GM12878 (cell line): ENCODE measurements at regions of chr18 and their contacts with region 1.

Region 1: DNA sequence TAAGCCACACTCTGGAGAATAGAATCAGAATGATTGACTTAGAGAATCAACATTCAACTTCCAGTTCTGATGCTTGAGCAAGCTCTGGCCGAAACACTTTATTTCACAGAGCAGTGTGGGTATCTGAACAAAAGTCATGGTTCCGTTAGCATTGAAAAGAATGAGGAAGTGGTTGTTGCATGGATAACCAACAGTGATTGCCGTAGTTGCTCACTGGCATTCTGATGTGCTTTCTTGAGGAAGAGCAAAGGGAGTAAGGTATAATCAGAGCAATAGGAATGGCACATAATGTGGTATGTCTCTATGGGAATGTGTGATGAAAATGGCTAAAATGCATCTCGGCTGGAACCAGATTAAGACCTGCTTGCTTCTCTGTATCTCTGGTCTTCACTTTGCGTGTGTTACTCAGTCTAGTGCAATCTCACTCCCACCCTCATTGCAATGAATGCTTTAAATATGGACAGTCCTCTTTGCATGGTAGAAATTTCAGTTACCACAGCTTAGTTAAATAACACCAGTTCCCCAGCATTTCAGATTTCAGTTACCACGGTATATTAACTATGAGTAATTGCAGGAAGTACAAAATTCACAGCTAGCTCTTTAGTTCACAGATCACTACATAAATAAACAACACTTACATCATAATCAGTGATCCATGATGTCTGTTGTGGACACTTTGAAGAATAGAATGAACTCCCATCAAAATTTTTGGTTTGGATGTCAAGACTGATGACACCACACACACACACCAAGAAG is 7.8 kb upstream of the RAB12 start:
- DNase-seq: peak; percentile 87
- ATAC-seq: peak; percentile 81
- H3K4me3 ChIP-seq: no peak overlapping the region
- H3K27ac ChIP-seq: peak overlapping the region; percentile 92
- H3K4me1 ChIP-seq: peaks cover 43% of the 10 kb centered on the region
- H3K27me3 ChIP-seq: no peaks in the 10 kb centered on the region
- CTCF ChIP-seq: no peak
- EP300 ChIP-seq: peak; percentile 83 to 85; a peak in 3 of 4 replicates
- POLR2A ChIP-seq: no peak
- RAD21 ChIP-seq: peak; percentile 14; the same call in 1 of the 2 replicates

Region 2: GRCh38 chr18:8254654-8255053 is 346.8 kb before region 1 on chr18:
- CTCF ChIA-PET with region 1: no interaction called
- POLR2A ChIA-PET with region 1: no interaction called
- RAD21 ChIA-PET with region 1: no interaction called
- SMC1A ChIA-PET with region 1: no interaction called
- in situ Hi-C with region 1: no loop called
- intact Hi-C with region 1: no loop called
- DNase-seq: no peak
- ATAC-seq: no peak
- H3K4me3 ChIP-seq: no peak overlapping the region
- H3K27ac ChIP-seq: no peak overlapping the region
- H3K4me1 ChIP-seq: no peaks in the 10 kb centered on the region
- H3K27me3 ChIP-seq: peaks cover 0 to 2% of the 10 kb centered on the region in 2 experiments; a peak in 2 of 4 replicates
- CTCF ChIP-seq: no peak
- EP300 ChIP-seq: no peak
- POLR2A ChIP-seq: no peak
- RAD21 ChIP-seq: no peak

Region 3: GRCh38 chr18:8478166-8478967 is 123.1 kb before region 1 on chr18:
- CTCF ChIA-PET with region 1: interaction called, 12 read pairs
- POLR2A ChIA-PET with region 1: no interaction called
- RAD21 ChIA-PET with region 1: interaction called, 3 read pairs
- SMC1A ChIA-PET with region 1: interaction called, 5 read pairs
- in situ Hi-C with region 1: no loop called
- intact Hi-C with region 1: no loop called
- DNase-seq: no peak
- ATAC-seq: peak; percentile 98
- H3K4me3 ChIP-seq: no peak overlapping the region
- H3K27ac ChIP-seq: no peak overlapping the region
- H3K4me1 ChIP-seq: no peaks in the 10 kb centered on the region
- H3K27me3 ChIP-seq: no peaks in the 10 kb centered on the region; a peak in 2 of 4 replicates
- CTCF ChIP-seq: peak; percentile 82 to 97 (median 94)
- EP300 ChIP-seq: no peak
- POLR2A ChIP-seq: no peak
- RAD21 ChIP-seq: peak; percentile 75

Region 4: GRCh38 chr18:8562919-8563318 is 38.5 kb before region 1 on chr18:
- CTCF ChIA-PET with region 1: interaction called, 3 read pairs
- POLR2A ChIA-PET with region 1: no interaction called
- RAD21 ChIA-PET with region 1: no interaction called
- SMC1A ChIA-PET with region 1: interaction called, 4 read pairs
- in situ Hi-C with region 1: no loop called
- intact Hi-C with region 1: loop called (anchors 1 kb)
- DNase-seq: no peak
- ATAC-seq: no peak
- H3K4me3 ChIP-seq: no peak overlapping the region
- H3K27ac ChIP-seq: no peak overlapping the region
- H3K4me1 ChIP-seq: no peaks in the 10 kb centered on the region
- H3K27me3 ChIP-seq: no peaks in the 10 kb centered on the region
- CTCF ChIP-seq: no peak
- EP300 ChIP-seq: no peak
- POLR2A ChIP-seq: no peak
- RAD21 ChIP-seq: no peak

Region 5: GRCh38 chr18:8584798-8585197 is 16.7 kb before region 1 on chr18:
- CTCF ChIA-PET with region 1: no interaction called
- POLR2A ChIA-PET with region 1: no interaction called
- RAD21 ChIA-PET with region 1: interaction called, 6 read pairs
- SMC1A ChIA-PET with region 1: interaction called, 12 read pairs
- in situ Hi-C with region 1: no loop called
- intact Hi-C with region 1: no loop called
- DNase-seq: no peak
- ATAC-seq: no peak
- H3K4me3 ChIP-seq: no peak overlapping the region
- H3K27ac ChIP-seq: no peak overlapping the region
- H3K4me1 ChIP-seq: no peaks in the 10 kb centered on the region
- H3K27me3 ChIP-seq: no peaks in the 10 kb centered on the region
- CTCF ChIP-seq: no peak
- EP300 ChIP-seq: no peak
- POLR2A ChIP-seq: no peak
- RAD21 ChIP-seq: no peak

Region 6: DNA sequence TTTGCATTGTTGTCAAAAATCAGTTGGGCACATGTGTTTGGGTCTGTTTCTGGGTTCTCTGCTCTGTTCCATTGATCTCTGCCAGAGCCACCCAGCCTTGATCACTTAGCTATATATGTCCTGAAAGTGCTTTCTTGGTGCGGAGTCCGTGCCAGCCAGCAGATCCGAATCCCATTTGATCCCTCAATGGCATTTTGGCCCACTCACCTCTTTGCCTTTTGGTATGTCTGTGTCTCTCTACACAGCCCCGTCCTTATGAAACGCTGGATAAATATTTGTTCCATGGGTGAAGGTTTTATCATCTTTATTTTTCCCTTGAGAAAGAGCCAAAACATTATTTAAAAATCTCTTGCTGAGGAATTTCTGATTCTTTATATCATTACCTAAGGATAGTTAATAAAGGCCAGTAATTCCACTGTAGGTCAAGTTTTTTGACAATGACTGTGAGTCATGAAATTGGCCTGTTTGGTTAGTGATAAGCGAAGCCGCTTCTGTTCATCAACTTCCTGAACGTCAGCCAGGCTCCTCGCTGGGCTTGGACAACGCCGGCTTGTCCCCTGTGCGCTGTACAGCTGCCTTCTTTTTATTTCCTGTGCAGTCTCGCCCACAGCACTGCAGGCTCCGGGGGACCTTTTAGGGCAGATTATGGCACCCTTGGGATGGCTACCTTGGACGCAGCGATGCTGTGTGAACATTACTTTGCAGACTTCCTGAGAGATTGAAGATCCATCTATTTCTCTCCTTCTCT is 128.8 kb after region 1 on chr18:
- CTCF ChIA-PET with region 1: no interaction called
- POLR2A ChIA-PET with region 1: no interaction called
- RAD21 ChIA-PET with region 1: no interaction called
- SMC1A ChIA-PET with region 1: no interaction called
- in situ Hi-C with region 1: no loop called
- intact Hi-C with region 1: no loop called
- DNase-seq: no peak
- ATAC-seq: no peak
- H3K4me3 ChIP-seq: no peak overlapping the region
- H3K27ac ChIP-seq: no peak overlapping the region
- H3K4me1 ChIP-seq: no peaks in the 10 kb centered on the region
- H3K27me3 ChIP-seq: no peaks in the 10 kb centered on the region
- CTCF ChIP-seq: no peak
- EP300 ChIP-seq: no peak
- POLR2A ChIP-seq: no peak
- RAD21 ChIP-seq: no peak

Region 7: DNA sequence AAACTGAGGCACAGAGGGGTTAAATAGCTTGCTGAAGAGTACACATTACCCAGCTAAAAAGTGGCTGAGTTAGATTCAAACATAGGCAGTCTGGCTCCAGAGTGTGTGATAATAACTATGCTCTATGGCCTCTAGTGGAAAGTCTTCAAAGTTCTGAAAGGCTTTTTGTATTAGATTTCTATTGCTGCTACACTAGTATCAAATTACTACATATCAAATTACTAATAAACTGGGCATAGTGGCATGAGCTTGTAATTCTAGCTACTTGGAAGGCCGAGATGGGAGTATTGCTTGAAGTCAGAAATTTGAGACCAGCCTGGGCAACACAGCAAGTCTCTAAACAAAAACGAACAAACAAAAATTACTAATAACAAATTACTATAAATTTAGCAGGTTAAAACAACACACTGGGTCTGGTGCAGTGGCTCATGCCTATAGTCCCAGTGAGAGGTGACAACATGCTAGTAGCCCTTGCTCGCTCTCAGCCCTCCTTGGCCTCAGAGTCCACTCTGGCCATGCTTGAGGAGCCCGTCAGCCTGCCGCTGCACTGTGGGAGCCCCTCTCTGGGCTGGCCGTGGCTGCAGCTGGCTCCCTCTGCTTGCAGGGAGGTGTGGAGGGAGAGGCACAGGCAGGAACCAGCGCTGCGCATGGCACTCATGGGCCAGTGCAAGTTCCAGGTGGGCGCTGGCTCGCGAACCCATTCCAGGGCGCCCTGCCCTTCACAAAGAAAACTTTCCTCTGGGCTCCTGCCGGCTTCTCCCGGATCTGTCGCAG is 695.0 kb after region 1 on chr18:
- CTCF ChIA-PET with region 1: no interaction called
- POLR2A ChIA-PET with region 1: no interaction called
- RAD21 ChIA-PET with region 1: no interaction called
- SMC1A ChIA-PET with region 1: no interaction called
- in situ Hi-C with region 1: no loop called
- intact Hi-C with region 1: no loop called
- DNase-seq: no peak
- ATAC-seq: no peak
- H3K4me3 ChIP-seq: no peak overlapping the region
- H3K27ac ChIP-seq: no peak overlapping the region
- H3K4me1 ChIP-seq: no peaks in the 10 kb centered on the region
- H3K27me3 ChIP-seq: no peaks in the 10 kb centered on the region
- CTCF ChIP-seq: no peak
- EP300 ChIP-seq: no peak
- POLR2A ChIP-seq: no peak
- RAD21 ChIP-seq: no peak